ENCODE measurements at regions of chr17 and their contacts with region 1.

Region 1: GRCh38 chr17:74961657-74962490 is 10.7 kb downstream of the HID1 start:
- DNase-seq: peak; percentile 90

Region 2: DNA sequence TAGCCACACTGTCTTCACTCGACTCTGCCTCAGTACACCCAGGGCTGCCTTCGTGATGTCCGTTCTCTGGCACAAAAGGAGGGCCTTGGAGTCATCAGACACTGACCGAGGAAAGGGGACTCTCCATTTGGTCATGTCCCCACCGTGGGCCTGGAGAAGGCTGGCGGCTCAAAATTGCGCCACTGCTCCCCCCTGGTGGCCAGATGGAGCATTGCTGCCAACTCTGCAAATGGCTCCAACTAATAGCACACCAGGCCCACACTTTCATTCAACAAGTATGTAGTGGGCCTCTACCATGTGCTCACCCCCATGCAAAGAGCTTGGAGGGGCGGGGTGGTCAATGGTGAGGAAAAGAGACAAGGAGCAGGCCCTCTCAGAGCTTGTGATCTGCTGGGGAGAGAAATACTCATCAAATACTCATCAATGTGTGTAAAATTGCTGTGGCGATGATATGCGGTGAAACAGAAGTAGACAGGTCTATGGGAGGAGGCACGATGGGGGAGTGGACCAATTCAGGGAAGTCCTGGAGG is 96.9 kb before region 1 on chr17:
- CTCF ChIA-PET with region 1: interaction called, 10 read pairs
- POLR2A ChIA-PET with region 1: no interaction called
- DNase-seq: peak; percentile 80

Region 3: GRCh38 chr17:74950207-74950606 is 11.7 kb before region 1 on chr17:
- CTCF ChIA-PET with region 1: interaction called, 25 read pairs
- POLR2A ChIA-PET with region 1: no interaction called
- DNase-seq: no peak

Region 4: GRCh38 chr17:74981979-74982662 is 20.2 kb after region 1 on chr17:
- CTCF ChIA-PET with region 1: interaction called, 10 read pairs
- POLR2A ChIA-PET with region 1: interaction called, 18 read pairs
- DNase-seq: peak; percentile 89

Region 5: DNA sequence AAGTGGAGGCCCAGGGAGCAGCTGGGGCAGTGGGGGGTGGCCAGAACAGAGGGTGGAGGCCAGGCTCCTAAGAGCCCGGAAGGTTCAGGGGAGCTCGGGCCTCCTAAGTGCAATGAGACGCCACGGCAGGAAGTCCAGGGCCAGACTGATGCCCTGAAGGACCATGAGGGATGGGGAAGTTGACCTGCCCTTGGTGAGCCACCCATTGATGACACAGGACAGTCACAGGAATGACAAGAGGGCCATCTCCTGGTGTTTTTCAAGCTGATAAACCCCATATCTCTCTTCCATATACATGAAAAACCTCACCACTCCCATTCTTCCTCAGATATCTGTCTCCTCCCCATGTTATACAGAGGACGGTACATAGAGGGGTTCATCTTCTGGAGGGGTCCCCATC is 44.8 kb after region 1 on chr17:
- CTCF ChIA-PET with region 1: interaction called, 60 read pairs
- POLR2A ChIA-PET with region 1: interaction called, 66 read pairs
- DNase-seq: no peak

Region 6: DNA sequence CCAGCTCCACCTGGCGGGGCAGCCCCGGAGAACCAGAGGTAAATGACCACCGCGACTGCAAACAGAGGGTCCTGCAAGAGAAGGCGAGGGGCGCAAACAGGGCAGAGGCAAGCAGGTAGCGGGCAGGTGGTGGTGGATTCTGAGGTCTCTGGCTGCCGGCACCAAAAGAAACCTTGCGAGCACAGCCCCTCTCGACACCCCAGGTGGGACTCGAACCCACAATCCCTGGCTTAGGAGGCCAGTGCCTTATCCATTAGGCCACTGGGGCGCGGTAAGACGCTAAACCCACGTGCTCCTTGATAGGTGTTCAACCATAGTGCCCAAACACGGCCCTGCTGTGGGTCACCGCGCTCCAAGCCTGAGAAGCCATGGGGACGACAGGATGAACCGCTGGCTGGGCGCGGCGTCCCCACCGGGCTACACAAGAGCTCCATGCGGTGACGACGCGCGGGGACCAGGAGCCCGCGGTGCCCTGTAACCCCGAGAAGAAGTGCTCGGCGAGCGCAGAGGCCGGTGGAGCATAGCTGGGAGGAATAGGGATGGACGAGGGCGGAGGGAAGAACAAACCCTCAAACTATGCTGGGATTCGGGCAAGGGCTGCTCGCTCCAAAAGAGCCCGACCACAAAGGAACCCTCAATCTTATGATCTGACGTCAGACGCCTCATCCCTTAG is 72.5 kb after region 1 on chr17:
- CTCF ChIA-PET with region 1: interaction called, 17 read pairs
- POLR2A ChIA-PET with region 1: interaction called, 20 read pairs
- DNase-seq: peak; percentile 69